Mammary epithelial cell (primary cell): ENCODE measurements at regions of chr21 and their contacts with region 1.

Region 1: GRCh38 chr21:32207406-32207716 is 71.5 kb downstream of the MIS18A start:
- DNase-seq: no peak
- H3K4me3 ChIP-seq: no peak overlapping the region
- H3K27ac ChIP-seq: no peak overlapping the region
- H3K4me1 ChIP-seq: no peaks in the 10 kb centered on the region
- H3K27me3 ChIP-seq: no peaks in the 10 kb centered on the region
- CTCF ChIP-seq: no peak

Region 2: GRCh38 chr21:32162727-32163320 is 44.5 kb before region 1 on chr21:
- CTCF ChIA-PET with region 1: no interaction called
- dilution Hi-C with region 1: loop called (anchors 5 kb)
- in situ Hi-C with region 1: no loop called
- intact Hi-C with region 1: no loop called
- DNase-seq: no peak
- H3K4me3 ChIP-seq: no peak overlapping the region
- H3K27ac ChIP-seq: no peak overlapping the region
- H3K4me1 ChIP-seq: no peaks in the 10 kb centered on the region
- H3K27me3 ChIP-seq: no peaks in the 10 kb centered on the region
- CTCF ChIP-seq: no peak